ENCODE measurements at regions of chr5 and their contacts with region 1.

Region 1: DNA sequence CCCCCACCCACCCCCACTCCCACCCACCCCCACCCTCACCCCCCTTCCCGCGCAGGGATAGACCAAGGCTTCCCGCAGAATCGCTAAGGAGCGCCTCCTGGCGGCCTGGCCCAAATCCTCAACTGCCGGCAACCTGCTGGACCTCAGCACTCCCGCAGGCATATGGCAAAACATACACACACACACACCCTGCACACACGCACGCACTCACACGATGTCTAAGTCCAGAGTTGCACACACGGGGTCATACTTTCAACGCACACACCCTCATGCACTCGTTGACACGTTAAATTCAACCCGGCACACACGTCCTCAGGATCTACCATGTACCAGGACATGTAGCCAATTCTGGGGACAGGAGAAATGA is 1.7 kb downstream of the CPLX2 start:
- DNase-seq: no peak
- ATAC-seq: 0 out of 2 replicates have a peak, but pooled peaks have one; percentile 43
- H3K4me3 ChIP-seq: no peak overlapping the region
- H3K27ac ChIP-seq: no peak overlapping the region
- H3K4me1 ChIP-seq: no peaks in the 10 kb centered on the region
- H3K27me3 ChIP-seq: peaks cover 16% of the 10 kb centered on the region
- CTCF ChIP-seq: peak; percentile 55; the same call in 1 of the 2 replicates

Region 2: GRCh38 chr5:175746851-175747250 is 126.2 kb before region 1 on chr5:
- CTCF ChIA-PET with region 1: no interaction called
- POLR2A ChIA-PET with region 1: no interaction called
- in situ Hi-C with region 1: no loop called
- intact Hi-C with region 1: loop called (anchors 10 kb)
- DNase-seq: no peak
- ATAC-seq: peak; percentile 57; the same call in 1 of the 2 replicates
- H3K4me3 ChIP-seq: no peak overlapping the region
- H3K27ac ChIP-seq: no peak overlapping the region
- H3K4me1 ChIP-seq: no peaks in the 10 kb centered on the region
- H3K27me3 ChIP-seq: peaks cover 14% of the 10 kb centered on the region; the same call in 1 of the 2 replicates
- CTCF ChIP-seq: no peak

Region 3: DNA sequence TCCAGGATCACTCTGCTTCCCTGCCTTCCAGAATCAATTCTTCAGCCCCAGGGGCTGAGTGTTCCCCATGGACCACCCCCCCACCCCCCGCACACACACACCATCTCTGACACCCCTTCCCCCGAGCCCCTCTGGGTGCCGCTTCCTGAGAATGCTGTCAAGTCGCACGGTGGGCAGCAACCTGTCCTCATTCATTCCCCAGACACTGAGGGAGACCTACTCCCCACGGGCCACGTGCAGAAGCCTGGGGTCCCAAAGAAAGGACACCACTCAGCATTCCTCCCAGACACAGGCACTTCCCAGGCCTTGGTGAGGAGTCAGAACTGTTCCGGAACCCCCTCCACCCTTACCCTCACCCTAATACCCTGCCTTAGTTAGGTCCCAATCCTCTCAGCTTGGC is 11.1 kb after region 1 on chr5:
- CTCF ChIA-PET with region 1: no interaction called
- POLR2A ChIA-PET with region 1: interaction called, 17 read pairs
- in situ Hi-C with region 1: no loop called
- intact Hi-C with region 1: no loop called
- DNase-seq: no peak
- ATAC-seq: no peak
- H3K4me3 ChIP-seq: no peak overlapping the region
- H3K27ac ChIP-seq: no peak overlapping the region
- H3K4me1 ChIP-seq: no peaks in the 10 kb centered on the region
- H3K27me3 ChIP-seq: no peaks in the 10 kb centered on the region
- CTCF ChIP-seq: no peak

Region 4: DNA sequence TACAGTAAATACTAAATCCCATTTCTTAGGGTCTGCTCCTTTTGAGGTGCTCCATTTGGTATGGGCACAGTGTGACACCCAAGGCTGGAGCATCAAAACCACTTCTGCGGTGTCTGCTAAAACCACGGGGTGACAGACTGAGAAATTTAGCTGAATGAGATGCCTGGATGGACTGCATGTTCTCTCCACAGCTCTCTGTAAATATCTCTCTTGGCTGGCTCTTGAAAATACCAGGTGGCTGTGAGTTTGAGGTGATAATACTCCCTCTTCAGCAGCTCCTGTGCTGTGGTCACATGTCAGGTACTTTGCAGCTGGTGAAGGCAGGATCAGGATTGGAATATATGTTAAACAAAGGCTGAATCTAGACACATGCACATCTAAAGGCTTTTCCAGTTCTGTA is 271.4 kb after region 1 on chr5:
- CTCF ChIA-PET with region 1: no interaction called
- POLR2A ChIA-PET with region 1: no interaction called
- in situ Hi-C with region 1: no loop called
- intact Hi-C with region 1: no loop called
- DNase-seq: no peak
- ATAC-seq: no peak
- H3K4me3 ChIP-seq: no peak overlapping the region
- H3K27ac ChIP-seq: no peak overlapping the region
- H3K4me1 ChIP-seq: no peaks in the 10 kb centered on the region
- H3K27me3 ChIP-seq: peaks cover 23% of the 10 kb centered on the region
- CTCF ChIP-seq: no peak

Region 5: DNA sequence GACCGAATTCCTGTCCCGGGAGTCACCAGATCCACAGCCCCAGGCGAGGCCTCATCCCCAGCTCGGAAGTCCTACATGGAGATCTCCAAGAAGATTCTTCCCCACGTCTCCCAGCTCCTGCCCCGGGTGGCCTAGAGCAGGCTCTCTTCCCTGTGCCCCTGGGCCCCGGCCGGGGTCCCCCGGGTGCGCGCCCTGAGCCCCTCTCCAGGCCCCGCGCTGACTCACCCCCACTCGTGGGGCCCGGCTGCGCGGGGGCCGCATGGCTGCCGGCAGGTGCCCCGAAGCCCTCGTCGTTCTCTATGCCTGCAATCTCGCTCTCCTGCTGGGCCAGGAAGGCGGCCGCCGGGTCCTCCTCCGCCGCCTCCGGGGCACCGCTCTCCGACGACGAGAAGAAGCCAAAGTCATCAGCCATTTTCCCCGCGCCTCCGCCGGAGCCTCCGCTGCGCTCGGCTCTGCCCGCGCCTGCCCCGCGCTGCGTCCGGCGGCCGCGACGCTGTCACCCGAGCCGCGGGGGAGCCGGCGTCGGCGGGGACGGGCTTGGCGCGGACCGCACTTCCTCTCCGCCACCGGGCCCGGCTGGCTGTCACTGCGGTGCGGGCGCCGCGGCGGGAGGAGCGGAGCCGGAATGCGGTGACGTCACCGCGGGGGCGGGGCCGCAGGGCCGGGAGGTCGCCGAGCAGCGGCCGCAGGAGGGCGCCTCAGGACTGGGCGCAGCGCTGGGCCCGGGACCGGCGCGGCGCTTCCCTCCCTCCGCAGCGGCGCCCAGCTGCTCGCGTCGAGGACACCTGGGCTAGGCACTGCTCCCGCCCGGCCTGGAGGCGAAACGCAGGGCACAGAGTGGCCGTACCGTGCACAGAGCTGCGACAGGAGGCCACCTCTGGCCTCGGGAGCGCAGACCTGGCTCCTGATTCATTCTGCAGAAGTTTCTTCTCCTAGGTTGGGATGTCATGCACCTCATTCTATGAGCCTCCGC is 543.2 kb after region 1 on chr5 and contains the start of gene CLTB:
- CTCF ChIA-PET with region 1: no interaction called
- POLR2A ChIA-PET with region 1: no interaction called
- in situ Hi-C with region 1: no loop called
- intact Hi-C with region 1: no loop called
- DNase-seq: no peak
- ATAC-seq: peak; percentile 98
- H3K4me3 ChIP-seq: peak within 1 kb of the TSS; percentile 81 to 86
- H3K27ac ChIP-seq: peak within 1 kb of the TSS; percentile 81
- H3K4me1 ChIP-seq: peaks cover 16% of the 10 kb centered on the region; the same call in 1 of the 2 replicates
- H3K27me3 ChIP-seq: no peaks in the 10 kb centered on the region
- CTCF ChIP-seq: peak; percentile 99
- total RNA-seq, gene CLTB: 124 TPM

Measured in Panc1 (cell line).